Naive thymus-derived CD8-positive, alpha-beta T cell (primary cell): ENCODE measurements at regions of chr16 and their contacts with region 1.

Region 1: GRCh38 chr16:70380861-70381603 is 34.3 kb downstream of the DDX19A start:
- DNase-seq: peak; percentile 90 to 97 (median 94)
- ATAC-seq: peak; percentile 88 to 92
- H3K4me3 Mint-ChIP-seq: peak overlapping the region; percentile 91 to 99 (median 95)
- H3K27ac Mint-ChIP-seq: peak overlapping the region; percentile 79 to 98 (median 94)
- H3K4me1 Mint-ChIP-seq: peaks cover 6 to 26% (median 18%) of the 10 kb centered on the region in 4 donors
- H3K27me3 Mint-ChIP-seq: no peaks in the 10 kb centered on the region

Region 2: DNA sequence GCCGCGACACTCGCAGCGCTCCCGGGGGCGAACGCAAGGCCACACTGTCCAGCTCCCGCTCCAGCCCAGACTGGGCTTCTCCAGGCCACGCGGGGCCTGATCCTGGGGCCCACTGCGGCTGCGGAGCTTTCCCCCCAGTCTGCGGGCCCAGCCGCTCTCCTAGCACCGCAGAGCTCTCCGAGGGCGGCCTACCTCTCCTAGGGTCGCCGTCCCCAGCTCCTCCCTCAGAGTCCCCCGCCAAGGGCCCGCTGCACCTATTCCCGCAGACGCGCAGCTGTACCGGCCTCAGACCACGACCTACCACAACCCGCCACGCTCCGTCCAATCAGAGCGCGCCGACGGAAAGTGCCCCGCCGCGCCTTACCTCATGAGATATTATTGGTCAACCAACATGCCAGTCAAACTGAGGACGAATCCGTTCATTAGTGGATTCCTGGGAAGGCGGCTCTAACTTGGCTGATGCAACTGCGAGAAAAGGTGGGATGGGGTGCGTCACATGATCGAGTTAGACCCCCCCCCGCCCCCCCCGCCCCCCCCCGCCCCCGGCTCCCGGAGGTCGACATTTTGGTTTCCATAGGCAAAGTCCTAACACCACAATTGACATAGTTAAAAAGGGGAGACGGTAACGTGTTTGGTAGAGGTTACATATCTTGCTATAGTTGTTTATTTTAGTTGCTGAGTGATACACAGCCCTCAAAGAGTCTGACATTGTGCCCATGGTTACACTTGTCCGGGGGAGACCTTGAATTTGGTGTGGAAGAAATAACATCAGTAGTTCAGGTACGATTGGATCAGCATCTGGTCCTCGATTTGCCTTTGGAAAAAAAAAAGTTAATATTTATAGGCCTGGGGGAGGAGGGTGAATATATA is 91.6 kb before region 1 on chr16 and contains the start of gene AARS1:
- POLR2A ChIA-PET with region 1: interaction called, 16 read pairs
- DNase-seq: peak; percentile 86 to 98 (median 96)
- ATAC-seq: peak; percentile 95 to 97
- H3K4me3 Mint-ChIP-seq: peak within 1 kb of the TSS; percentile 93 to 100 (median 99)
- H3K27ac Mint-ChIP-seq: peak within 1 kb of the TSS; percentile 94 to 100 (median 98)
- H3K4me1 Mint-ChIP-seq: peaks cover 8 to 28% (median 21%) of the 10 kb centered on the region in 4 donors
- H3K27me3 Mint-ChIP-seq: peaks cover 0 to 2% (median 0%) of the 10 kb centered on the region in 5 donors
- polyA plus RNA-seq, gene AARS1: 22.9 to 45.6 (median 37.8) TPM

Region 3: GRCh38 chr16:70345840-70346239 is 35.2 kb before region 1 on chr16:
- POLR2A ChIA-PET with region 1: interaction called, 58 read pairs
- DNase-seq: no peak
- ATAC-seq: no peak
- H3K4me3 Mint-ChIP-seq: peak overlapping the region; percentile 77 to 98 (median 94)
- H3K27ac Mint-ChIP-seq: peak overlapping the region; percentile 89 to 100 (median 98)
- H3K4me1 Mint-ChIP-seq: peaks cover 15 to 38% (median 29%) of the 10 kb centered on the region in 4 donors
- H3K27me3 Mint-ChIP-seq: no peaks in the 10 kb centered on the region

Region 4: GRCh38 chr16:70391881-70392481 is 10.9 kb after region 1 on chr16:
- POLR2A ChIA-PET with region 1: interaction called, 20 read pairs
- DNase-seq: peak in 1 of 10 donors; percentile 35
- ATAC-seq: no peak
- H3K4me3 Mint-ChIP-seq: no peak overlapping the region
- H3K27ac Mint-ChIP-seq: peak overlapping the region in 2 of 10 donors; percentile 53 to 57
- H3K4me1 Mint-ChIP-seq: peaks cover 0 to 5% (median 3%) of the 10 kb centered on the region in 4 donors
- H3K27me3 Mint-ChIP-seq: no peaks in the 10 kb centered on the region

Region 5: DNA sequence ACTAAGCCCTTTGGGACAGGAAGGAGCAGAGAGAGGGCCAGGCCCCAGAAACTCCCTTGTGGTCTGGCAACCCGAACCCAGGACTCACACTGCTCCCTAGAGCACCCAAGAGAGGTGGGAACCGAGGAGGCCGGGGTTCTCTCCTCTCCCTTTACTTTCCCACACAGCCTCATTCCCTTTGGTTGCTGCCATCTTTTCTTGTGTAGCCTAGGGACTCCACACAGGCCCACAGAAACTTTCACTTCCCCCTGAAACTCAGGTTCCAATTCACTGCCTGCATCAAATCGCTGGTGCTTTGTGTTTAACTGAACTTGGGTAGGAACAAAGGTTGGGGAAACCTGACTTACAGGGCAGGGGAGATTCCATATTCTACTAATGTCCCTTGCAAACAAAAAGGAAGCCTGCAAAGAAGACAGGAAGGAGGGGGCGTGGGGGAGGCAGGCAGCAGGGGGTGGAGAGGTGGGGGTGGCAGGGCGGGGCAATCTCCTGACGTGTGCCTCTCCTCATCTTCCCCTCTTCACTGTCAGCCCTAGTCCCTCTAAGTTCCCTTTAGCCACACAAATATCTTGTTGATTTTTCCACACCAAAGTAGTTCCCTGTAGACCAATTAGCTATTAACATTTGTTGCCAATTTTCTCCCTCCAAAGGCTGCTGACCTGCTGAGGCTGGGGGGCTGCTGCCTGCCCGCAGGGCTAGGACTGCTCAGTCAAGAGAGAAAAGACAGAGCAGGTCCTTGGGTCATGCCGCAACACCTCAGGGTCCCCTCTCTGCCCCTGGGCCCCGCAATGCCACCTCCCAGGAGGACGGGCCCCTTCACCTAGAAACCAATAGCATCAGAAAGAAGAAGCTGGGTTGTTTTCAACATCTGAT is 49.9 kb after region 1 on chr16:
- POLR2A ChIA-PET with region 1: interaction called, 23 read pairs
- DNase-seq: peak; percentile 48 to 79 (median 64)
- ATAC-seq: peak; percentile 81 to 92
- H3K4me3 Mint-ChIP-seq: peak overlapping the region; percentile 56 to 86 (median 72)
- H3K27ac Mint-ChIP-seq: peak overlapping the region; percentile 90 to 96 (median 93)
- H3K4me1 Mint-ChIP-seq: peaks cover 39 to 82% (median 72%) of the 10 kb centered on the region in 4 donors
- H3K27me3 Mint-ChIP-seq: no peaks in the 10 kb centered on the region

Region 6: GRCh38 chr16:70454222-70455034 is 73.4 kb after region 1 on chr16 and contains the start of gene FCSK:
- POLR2A ChIA-PET with region 1: interaction called, 59 read pairs
- DNase-seq: peak; percentile 53 to 94 (median 72)
- ATAC-seq: peak; percentile 92 to 93
- H3K4me3 Mint-ChIP-seq: peak within 1 kb of the TSS; percentile 86 to 96 (median 93)
- H3K27ac Mint-ChIP-seq: peak within 1 kb of the TSS; percentile 88 to 95 (median 92)
- H3K4me1 Mint-ChIP-seq: peaks cover 6 to 40% (median 23%) of the 10 kb centered on the region in 4 donors
- H3K27me3 Mint-ChIP-seq: no peaks in the 10 kb centered on the region
- polyA plus RNA-seq, gene FCSK: 4.5 to 9.6 (median 9.3) TPM